CD8-positive, alpha-beta T cell (primary cell): ENCODE measurements at regions of chr14 and their contacts with region 1.

Region 1: DNA sequence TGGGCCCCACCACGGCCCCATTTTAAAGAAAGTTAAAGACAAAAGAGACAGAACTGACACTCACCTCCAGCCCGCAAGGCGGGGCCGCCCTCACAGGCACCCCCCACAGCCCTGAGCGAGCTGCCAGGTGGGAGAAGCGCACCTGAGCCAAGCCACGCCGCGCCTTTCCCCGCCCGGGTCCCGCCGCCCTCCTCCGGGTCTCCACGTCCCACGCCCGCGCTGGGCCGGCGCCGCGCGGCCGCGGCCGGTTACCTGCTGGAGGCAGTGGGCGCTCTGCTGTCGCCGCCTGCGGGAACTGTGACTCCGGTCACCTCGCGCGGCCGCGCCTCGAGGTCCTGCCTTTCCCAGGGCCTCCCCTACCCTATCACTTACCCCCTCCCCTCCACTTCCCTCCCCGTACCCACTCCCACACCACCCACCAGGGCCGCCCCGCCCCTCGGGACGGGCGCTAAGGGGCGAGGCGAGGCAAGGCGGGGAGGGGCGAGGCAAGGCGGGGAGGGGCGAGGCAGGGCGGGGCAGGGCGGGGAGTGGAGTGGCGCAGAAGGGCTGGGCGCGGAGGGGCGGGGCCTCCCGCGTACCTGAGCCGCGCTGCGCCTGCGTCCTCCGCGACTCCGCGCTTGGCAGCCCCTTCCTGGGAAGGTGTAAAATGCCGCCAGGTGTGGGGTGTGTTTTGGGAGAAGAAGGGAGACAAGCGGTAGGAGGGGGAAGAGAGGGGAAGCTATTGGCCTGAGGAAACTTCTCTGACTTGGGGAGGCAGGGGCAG is 31.0 kb downstream of the TC2N start:
- DNase-seq: peak; percentile 68 to 93 (median 88)
- ATAC-seq: peak; percentile 95
- H3K4me3 ChIP-seq: peak overlapping the region; percentile 55 to 70
- H3K4me3 Mint-ChIP-seq: peak overlapping the region; percentile 93
- H3K27ac ChIP-seq: peak overlapping the region; percentile 46 to 57
- H3K27ac Mint-ChIP-seq: peak overlapping the region; percentile 96
- H3K4me1 ChIP-seq: peaks cover 24% of the 10 kb centered on the region
- H3K4me1 Mint-ChIP-seq: peaks cover 80% of the 10 kb centered on the region
- H3K27me3 ChIP-seq: no peaks in the 10 kb centered on the region
- H3K27me3 Mint-ChIP-seq: no peaks in the 10 kb centered on the region
- CTCF ChIP-seq: no peak

Region 2: DNA sequence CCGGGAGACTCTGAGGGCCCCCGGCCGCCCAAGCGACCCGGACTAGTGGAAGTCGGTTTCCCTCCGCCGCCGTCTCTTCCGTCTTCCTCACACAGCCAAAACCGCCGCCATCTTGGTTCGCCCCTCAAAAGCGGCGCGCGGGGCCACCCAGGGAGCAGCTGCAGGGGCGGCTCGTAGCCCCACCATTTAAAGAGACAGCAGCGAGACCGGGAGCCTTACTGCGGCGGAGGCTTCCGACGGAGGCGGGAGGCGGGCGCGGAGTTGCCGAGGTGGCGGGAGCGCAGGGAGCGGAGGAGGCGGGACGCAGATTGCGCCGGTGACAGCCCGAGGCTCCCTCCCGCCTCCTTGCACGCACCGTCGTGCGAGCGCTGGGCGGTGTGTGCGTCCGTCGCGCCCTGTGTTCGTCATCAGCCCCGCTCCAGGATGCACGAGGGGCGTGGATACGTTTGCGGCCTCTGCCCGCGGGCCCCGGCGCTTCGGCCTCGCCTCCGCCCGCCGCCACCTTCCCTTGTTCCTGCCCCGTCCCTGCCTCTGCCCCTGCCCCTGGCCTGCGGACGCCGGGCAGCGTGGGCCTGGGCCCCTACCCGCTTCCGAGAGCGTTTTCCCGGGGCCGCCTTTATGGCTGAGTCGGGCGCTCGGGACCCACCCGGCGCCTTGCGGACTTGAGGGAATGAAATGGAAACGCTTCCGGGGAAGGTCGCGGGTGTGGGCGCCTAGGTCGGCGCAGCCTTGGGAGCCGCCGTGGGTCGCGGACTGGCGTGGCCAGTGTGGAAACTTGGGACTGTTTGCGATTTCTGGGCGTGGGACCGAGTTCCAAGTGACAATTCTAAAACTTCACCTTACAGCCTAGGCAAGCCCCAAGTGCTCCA is 325.9 kb before region 1 on chr14 and contains the start of gene PPP4R3A:
- CTCF ChIA-PET with region 1: no interaction called
- POLR2A ChIA-PET with region 1: no interaction called
- intact Hi-C with region 1: loop called in 1 of 2 experiments (anchors 2 kb)
- DNase-seq: peak; percentile 84 to 99 (median 93)
- ATAC-seq: peak; percentile 86
- H3K4me3 ChIP-seq: peak within 1 kb of the TSS; percentile 48 to 96
- H3K4me3 Mint-ChIP-seq: peak within 1 kb of the TSS; percentile 100
- H3K27ac ChIP-seq: peak within 1 kb of the TSS; percentile 94 to 98
- H3K27ac Mint-ChIP-seq: peak within 1 kb of the TSS; percentile 100
- H3K4me1 ChIP-seq: peaks cover 26% of the 10 kb centered on the region
- H3K4me1 Mint-ChIP-seq: peaks cover 32% of the 10 kb centered on the region
- H3K27me3 ChIP-seq: no peaks in the 10 kb centered on the region
- H3K27me3 Mint-ChIP-seq: no peaks in the 10 kb centered on the region
- CTCF ChIP-seq: no peak
- total RNA-seq, gene PPP4R3A: 279 to 285 TPM

Region 3: GRCh38 chr14:91817566-91818325 is 18.6 kb before region 1 on chr14:
- CTCF ChIA-PET with region 1: no interaction called
- POLR2A ChIA-PET with region 1: interaction called, 4 read pairs
- intact Hi-C with region 1: loop called in 1 of 2 experiments (anchors 2 kb)
- DNase-seq: peak in 2 of 9 experiments; percentile 49 to 61
- ATAC-seq: peak; percentile 52
- H3K4me3 ChIP-seq: no peak overlapping the region
- H3K4me3 Mint-ChIP-seq: no peak overlapping the region
- H3K27ac ChIP-seq: no peak overlapping the region
- H3K27ac Mint-ChIP-seq: peak overlapping the region; percentile 82
- H3K4me1 ChIP-seq: peaks cover 6% of the 10 kb centered on the region
- H3K4me1 Mint-ChIP-seq: peaks cover 70% of the 10 kb centered on the region
- H3K27me3 ChIP-seq: no peaks in the 10 kb centered on the region
- H3K27me3 Mint-ChIP-seq: no peaks in the 10 kb centered on the region
- CTCF ChIP-seq: no peak

Region 4: GRCh38 chr14:91872517-91873470 is 36.5 kb after region 1 on chr14:
- CTCF ChIA-PET with region 1: interaction called, 4 read pairs
- POLR2A ChIA-PET with region 1: interaction called, 18 read pairs
- intact Hi-C with region 1: loop called (anchors 1 to 2 kb)
- DNase-seq: peak in 7 of 9 experiments; percentile 51 to 87 (median 77)
- ATAC-seq: peak; percentile 37
- H3K4me3 ChIP-seq: peak overlapping the region; percentile 31 to 47
- H3K4me3 Mint-ChIP-seq: peak overlapping the region; percentile 71
- H3K27ac ChIP-seq: peak overlapping the region; percentile 83 to 86
- H3K27ac Mint-ChIP-seq: peak overlapping the region; percentile 99
- H3K4me1 ChIP-seq: peaks cover 92% of the 10 kb centered on the region
- H3K4me1 Mint-ChIP-seq: peaks cover 99% of the 10 kb centered on the region
- H3K27me3 ChIP-seq: no peaks in the 10 kb centered on the region
- H3K27me3 Mint-ChIP-seq: no peaks in the 10 kb centered on the region
- CTCF ChIP-seq: no peak

Region 5: DNA sequence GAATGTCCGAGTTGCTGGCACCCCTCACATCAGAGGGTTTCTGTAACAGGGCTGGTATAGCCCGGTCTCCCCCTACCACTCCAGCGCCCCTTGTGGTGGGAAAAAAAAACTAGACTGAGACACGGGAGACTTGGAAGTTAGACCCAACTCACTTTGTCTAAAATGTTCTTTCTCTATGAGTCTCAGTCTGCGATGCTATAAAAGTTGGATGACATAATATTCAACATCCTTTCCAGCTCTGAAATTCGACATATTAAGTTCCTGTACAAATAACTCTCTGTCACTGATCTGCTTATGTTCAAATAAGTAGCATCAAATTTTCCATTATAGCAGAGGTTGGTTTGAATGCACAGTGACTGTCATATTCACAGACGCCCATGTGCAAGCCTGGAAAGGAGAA is 56.7 kb after region 1 on chr14:
- CTCF ChIA-PET with region 1: interaction called, 3 read pairs
- POLR2A ChIA-PET with region 1: interaction called, 6 read pairs
- intact Hi-C with region 1: loop called (anchors 2 kb)
- DNase-seq: peak in 3 of 9 experiments; percentile 36 to 61 (median 53)
- ATAC-seq: peak; percentile 30
- H3K4me3 ChIP-seq: no peak overlapping the region
- H3K4me3 Mint-ChIP-seq: no peak overlapping the region
- H3K27ac ChIP-seq: no peak overlapping the region
- H3K27ac Mint-ChIP-seq: peak overlapping the region; percentile 57
- H3K4me1 ChIP-seq: peaks cover 56% of the 10 kb centered on the region
- H3K4me1 Mint-ChIP-seq: peaks cover 66% of the 10 kb centered on the region
- H3K27me3 ChIP-seq: no peaks in the 10 kb centered on the region
- H3K27me3 Mint-ChIP-seq: no peaks in the 10 kb centered on the region
- CTCF ChIP-seq: peak; percentile 50

Region 6: DNA sequence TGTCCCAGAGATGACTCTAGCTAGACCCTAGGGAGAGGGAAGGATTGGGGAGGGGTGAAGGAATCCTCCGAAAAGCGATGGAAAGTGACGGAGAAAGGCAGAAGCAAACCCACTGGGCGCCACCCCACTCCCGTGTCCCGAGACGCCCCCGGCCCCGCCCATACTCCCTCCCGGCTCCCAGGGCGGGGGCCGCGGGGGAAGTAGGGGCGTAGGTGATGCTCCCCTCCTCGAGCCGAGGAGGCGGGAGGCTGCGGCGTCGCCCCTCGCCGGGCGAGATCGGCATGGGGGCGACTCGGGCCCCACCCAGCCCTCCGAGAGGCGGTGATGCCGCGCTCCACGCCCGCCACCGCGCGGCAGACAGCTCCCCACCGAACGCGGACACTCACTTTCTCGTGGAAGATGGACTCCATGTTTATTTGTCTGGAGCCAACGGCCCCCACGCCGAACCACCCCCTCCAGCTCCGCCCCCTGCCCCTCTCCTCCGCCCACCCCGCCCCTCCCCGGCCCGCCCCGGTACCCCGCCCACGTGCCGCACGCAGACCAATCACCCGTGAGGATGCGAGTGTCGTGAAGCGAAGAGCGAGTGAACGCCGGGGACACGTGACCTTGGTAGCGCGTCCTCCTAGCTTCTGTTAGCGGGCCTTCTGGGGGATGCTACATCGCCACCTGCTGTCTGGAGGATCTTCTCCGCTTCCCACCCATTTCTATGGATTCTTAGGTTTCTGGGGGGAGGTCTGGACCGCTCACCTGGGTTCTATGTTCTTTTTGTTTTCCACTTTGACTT is 270.0 kb after region 1 on chr14 and contains the start of gene ATXN3:
- CTCF ChIA-PET with region 1: no interaction called
- POLR2A ChIA-PET with region 1: no interaction called
- intact Hi-C with region 1: loop called in 1 of 2 experiments (anchors 10 kb)
- DNase-seq: peak; percentile 88 to 99 (median 95)
- ATAC-seq: peak; percentile 87
- H3K4me3 ChIP-seq: peak within 1 kb of the TSS; percentile 88 to 96
- H3K4me3 Mint-ChIP-seq: peak within 1 kb of the TSS; percentile 95
- H3K27ac ChIP-seq: peak within 1 kb of the TSS; percentile 77 to 95
- H3K27ac Mint-ChIP-seq: peak within 1 kb of the TSS; percentile 93
- H3K4me1 ChIP-seq: peaks cover 45% of the 10 kb centered on the region
- H3K4me1 Mint-ChIP-seq: peaks cover 58% of the 10 kb centered on the region
- H3K27me3 ChIP-seq: no peaks in the 10 kb centered on the region
- H3K27me3 Mint-ChIP-seq: no peaks in the 10 kb centered on the region
- CTCF ChIP-seq: peak; percentile 68
- total RNA-seq, gene ATXN3: 26.5 to 27.2 TPM

Region 7: GRCh38 chr14:92362781-92363235 is 526.5 kb after region 1 on chr14:
- CTCF ChIA-PET with region 1: no interaction called
- POLR2A ChIA-PET with region 1: no interaction called
- intact Hi-C with region 1: no loop called
- DNase-seq: no peak
- ATAC-seq: no peak
- H3K4me3 ChIP-seq: no peak overlapping the region
- H3K4me3 Mint-ChIP-seq: no peak overlapping the region
- H3K27ac ChIP-seq: no peak overlapping the region
- H3K27ac Mint-ChIP-seq: no peak overlapping the region
- H3K4me1 ChIP-seq: no peaks in the 10 kb centered on the region
- H3K4me1 Mint-ChIP-seq: no peaks in the 10 kb centered on the region
- H3K27me3 ChIP-seq: no peaks in the 10 kb centered on the region
- H3K27me3 Mint-ChIP-seq: peaks cover 16% of the 10 kb centered on the region
- CTCF ChIP-seq: no peak

Region 8: GRCh38 chr14:92612988-92613658 is 776.8 kb after region 1 on chr14:
- CTCF ChIA-PET with region 1: no interaction called
- POLR2A ChIA-PET with region 1: no interaction called
- intact Hi-C with region 1: no loop called
- DNase-seq: peak; percentile 35 to 82 (median 72)
- ATAC-seq: peak; percentile 30
- H3K4me3 ChIP-seq: no peak overlapping the region
- H3K4me3 Mint-ChIP-seq: no peak overlapping the region
- H3K27ac ChIP-seq: no peak overlapping the region
- H3K27ac Mint-ChIP-seq: peak overlapping the region; percentile 49
- H3K4me1 ChIP-seq: peaks cover 50% of the 10 kb centered on the region
- H3K4me1 Mint-ChIP-seq: peaks cover 66% of the 10 kb centered on the region
- H3K27me3 ChIP-seq: no peaks in the 10 kb centered on the region
- H3K27me3 Mint-ChIP-seq: no peaks in the 10 kb centered on the region
- CTCF ChIP-seq: peak; percentile 94